ENCODE measurements at regions of chr19 and their contacts with region 1.

Region 1: GRCh38 chr19:29268721-29269393 is 55.9 kb upstream of the UQCRFS1 start:
- DNase-seq: no peak
- ATAC-seq: no peak
- H3K4me3 ChIP-seq: no peak overlapping the region
- H3K27ac ChIP-seq: no peak overlapping the region
- H3K4me1 ChIP-seq: 0 out of 2 replicates have a peak, but pooled peaks cover 2% of the 10 kb centered on the region
- H3K27me3 ChIP-seq: peaks cover 5% of the 10 kb centered on the region; the same call in 1 of the 2 replicates
- CTCF ChIP-seq: no peak

Region 2: DNA sequence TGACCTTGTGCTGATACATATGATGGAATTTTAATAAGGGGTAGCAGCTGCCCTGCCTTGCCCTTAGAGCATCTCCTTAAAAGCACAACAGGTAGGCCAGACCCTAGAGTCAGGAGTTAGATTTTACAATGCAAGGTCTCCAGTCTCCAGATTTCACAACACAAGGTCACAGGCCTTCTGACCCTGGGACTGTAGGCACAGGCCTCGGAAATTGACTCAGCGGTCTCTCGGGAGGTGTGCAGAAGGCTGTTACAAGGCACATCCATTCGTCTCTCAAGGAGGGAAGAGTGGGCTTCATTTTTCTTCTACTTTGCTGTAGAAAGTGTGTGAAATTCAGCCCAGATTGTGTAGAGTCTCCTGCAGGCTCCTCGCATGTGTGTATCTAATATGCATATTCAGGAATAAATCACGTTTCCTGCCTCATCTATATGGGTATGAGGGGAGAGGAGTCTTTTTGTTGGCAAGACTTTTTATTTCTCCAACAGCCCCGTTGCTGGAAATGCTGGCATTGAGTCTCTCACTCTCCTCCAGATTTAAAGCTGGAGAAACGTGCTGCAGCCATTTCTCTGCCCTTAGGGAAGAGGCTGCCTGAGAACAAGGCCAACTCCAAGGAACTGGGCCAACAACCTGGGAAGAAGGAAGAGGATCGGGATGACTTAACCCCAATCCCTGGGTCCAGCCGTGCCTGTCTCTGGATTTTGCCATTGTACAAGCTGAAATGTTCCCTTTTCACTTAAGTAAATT is 80.4 kb before region 1 on chr19:
- CTCF ChIA-PET with region 1: no interaction called
- POLR2A ChIA-PET with region 1: interaction called, 10 read pairs
- in situ Hi-C with region 1: no loop called
- intact Hi-C with region 1: no loop called
- DNase-seq: no peak
- ATAC-seq: no peak
- H3K4me3 ChIP-seq: no peak overlapping the region
- H3K27ac ChIP-seq: no peak overlapping the region
- H3K4me1 ChIP-seq: no peaks in the 10 kb centered on the region
- H3K27me3 ChIP-seq: peaks cover 5% of the 10 kb centered on the region; the same call in 1 of the 2 replicates
- CTCF ChIP-seq: no peak

Region 3: GRCh38 chr19:29293736-29294342 is 25.0 kb after region 1 on chr19:
- CTCF ChIA-PET with region 1: interaction called, 12 read pairs
- POLR2A ChIA-PET with region 1: no interaction called
- in situ Hi-C with region 1: no loop called
- intact Hi-C with region 1: no loop called
- DNase-seq: no peak
- ATAC-seq: no peak
- H3K4me3 ChIP-seq: no peak overlapping the region
- H3K27ac ChIP-seq: no peak overlapping the region
- H3K4me1 ChIP-seq: no peaks in the 10 kb centered on the region
- H3K27me3 ChIP-seq: no peaks in the 10 kb centered on the region
- CTCF ChIP-seq: no peak